Activated naive CD8-positive, alpha-beta T cell treated with anti-CD3 and anti-CD28 coated beads, Interleukin-2, amount 10 ng/mL, durations not matched to agents 7 days and 5 days (primary cell): ENCODE measurements at regions of chr20 and their contacts with region 1.

Region 1: GRCh38 chr20:17569616-17570346 is at the start of gene DSTN:
- DNase-seq: peak; percentile 93
- ATAC-seq: peak; percentile 88
- H3K4me3 Mint-ChIP-seq: peak within 1 kb of the TSS; percentile 93
- H3K27ac Mint-ChIP-seq: peak within 1 kb of the TSS; percentile 88
- H3K4me1 Mint-ChIP-seq: peaks cover 13% of the 10 kb centered on the region
- H3K27me3 Mint-ChIP-seq: peaks cover 22% of the 10 kb centered on the region
- total RNA-seq, gene DSTN: 41.7 to 47.5 TPM

Region 2: GRCh38 chr20:17395729-17396128 is 174.1 kb before region 1 on chr20:
- POLR2A ChIA-PET with region 1: no interaction called
- DNase-seq: no peak
- ATAC-seq: no peak
- H3K4me3 Mint-ChIP-seq: no peak overlapping the region
- H3K27ac Mint-ChIP-seq: no peak overlapping the region
- H3K4me1 Mint-ChIP-seq: no peaks in the 10 kb centered on the region
- H3K27me3 Mint-ChIP-seq: peaks cover 6% of the 10 kb centered on the region

Region 3: GRCh38 chr20:17610566-17611289 is 40.9 kb after region 1 on chr20:
- POLR2A ChIA-PET with region 1: interaction called, 28 read pairs
- DNase-seq: peak; percentile 73
- ATAC-seq: peak; percentile 83
- H3K4me3 Mint-ChIP-seq: peak overlapping the region; percentile 64
- H3K27ac Mint-ChIP-seq: peak overlapping the region; percentile 99
- H3K4me1 Mint-ChIP-seq: peaks cover 32% of the 10 kb centered on the region
- H3K27me3 Mint-ChIP-seq: no peaks in the 10 kb centered on the region